Activated B cell treated with CpG ODN at 0.5 μM for 24 hours (primary cell): ENCODE measurements at regions of chr1 and their contacts with region 1.

Region 1: DNA sequence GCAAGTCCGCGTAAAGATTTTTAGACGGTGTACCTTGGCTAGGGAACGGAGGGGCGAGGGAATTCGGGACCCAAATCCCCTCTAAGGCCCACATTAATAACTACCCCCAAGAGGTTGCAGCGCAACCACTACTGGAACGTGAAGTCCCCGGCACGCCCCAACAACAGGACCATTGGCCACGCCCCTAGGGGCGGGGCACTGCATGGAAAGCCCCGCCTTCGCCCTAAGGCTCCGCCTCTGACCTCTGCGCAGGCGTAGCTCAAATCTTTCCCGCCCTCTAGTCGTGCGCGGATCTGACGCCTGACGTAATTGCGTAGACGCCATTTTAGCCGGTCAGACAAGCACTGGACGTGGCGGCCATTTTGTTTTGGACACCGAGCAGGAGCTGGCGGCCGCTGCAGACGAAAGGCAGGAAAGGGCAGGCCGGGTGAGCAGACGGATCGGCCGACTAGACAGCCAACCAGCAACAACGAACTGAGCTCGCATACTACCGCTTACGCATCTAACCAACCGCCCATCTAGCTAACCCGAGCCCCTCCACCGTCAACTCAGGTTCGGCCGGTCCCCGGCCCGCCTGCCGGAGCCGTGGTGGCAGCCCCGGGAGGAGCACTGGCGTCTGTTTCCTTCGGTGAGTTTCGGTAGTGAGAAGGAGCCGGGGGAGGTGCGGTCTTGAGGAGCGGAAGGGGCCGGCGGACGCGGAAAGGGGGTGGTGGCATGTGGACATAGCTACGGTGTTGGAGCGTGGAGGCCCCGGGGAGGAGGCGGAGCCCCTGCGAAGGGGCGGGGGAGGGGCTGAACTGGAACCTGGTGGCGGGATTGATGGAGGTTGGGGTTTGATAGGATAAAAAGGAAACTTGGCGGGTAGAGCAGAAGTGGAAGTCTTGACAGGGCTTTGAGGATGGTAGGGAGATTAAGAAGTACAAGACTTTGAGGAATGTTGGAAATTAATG is at the start of gene CHTOP:
- DNase-seq: peak; percentile 98
- ATAC-seq: peak; percentile 86
- H3K4me3 Mint-ChIP-seq: peak within 1 kb of the TSS; percentile 99
- H3K27ac Mint-ChIP-seq: peak within 1 kb of the TSS; percentile 100
- H3K4me1 Mint-ChIP-seq: peaks cover 44% of the 10 kb centered on the region
- H3K27me3 Mint-ChIP-seq: no peaks in the 10 kb centered on the region
- CTCF ChIP-seq: no peak
- total RNA-seq, gene CHTOP: 140 and 148 TPM in 2 replicates

Region 2: DNA sequence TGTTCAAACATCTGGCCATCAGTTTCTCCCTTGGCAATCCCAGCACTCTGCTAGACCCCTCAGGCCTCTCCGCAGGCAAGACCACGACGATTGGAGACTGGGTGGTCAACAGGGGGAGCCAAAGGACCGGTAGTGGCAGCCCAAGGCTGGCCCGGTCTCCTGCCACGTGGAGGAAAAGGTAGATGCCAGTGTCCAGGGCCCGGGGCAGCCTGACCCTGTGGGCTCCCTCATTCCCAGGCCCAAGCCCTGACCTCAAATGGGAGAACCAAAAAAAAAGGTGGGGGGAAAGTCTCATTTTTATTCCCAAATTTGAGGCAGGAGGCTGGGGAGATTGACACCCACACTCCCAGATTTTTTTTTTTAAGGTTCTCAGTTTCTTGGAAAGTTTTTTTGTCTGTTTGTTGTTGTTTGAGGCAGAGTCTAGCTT is 123.0 kb before region 1 on chr1:
- CTCF ChIA-PET with region 1: interaction called, 8 read pairs
- POLR2A ChIA-PET with region 1: interaction called, 8 read pairs
- intact Hi-C with region 1: loop called (anchors 2 kb)
- DNase-seq: peak; percentile 67
- ATAC-seq: peak; percentile 97
- H3K4me3 Mint-ChIP-seq: no peak overlapping the region
- H3K27ac Mint-ChIP-seq: no peak overlapping the region
- H3K4me1 Mint-ChIP-seq: peaks cover 4% of the 10 kb centered on the region
- H3K27me3 Mint-ChIP-seq: no peaks in the 10 kb centered on the region
- CTCF ChIP-seq: peak; percentile 81

Region 3: DNA sequence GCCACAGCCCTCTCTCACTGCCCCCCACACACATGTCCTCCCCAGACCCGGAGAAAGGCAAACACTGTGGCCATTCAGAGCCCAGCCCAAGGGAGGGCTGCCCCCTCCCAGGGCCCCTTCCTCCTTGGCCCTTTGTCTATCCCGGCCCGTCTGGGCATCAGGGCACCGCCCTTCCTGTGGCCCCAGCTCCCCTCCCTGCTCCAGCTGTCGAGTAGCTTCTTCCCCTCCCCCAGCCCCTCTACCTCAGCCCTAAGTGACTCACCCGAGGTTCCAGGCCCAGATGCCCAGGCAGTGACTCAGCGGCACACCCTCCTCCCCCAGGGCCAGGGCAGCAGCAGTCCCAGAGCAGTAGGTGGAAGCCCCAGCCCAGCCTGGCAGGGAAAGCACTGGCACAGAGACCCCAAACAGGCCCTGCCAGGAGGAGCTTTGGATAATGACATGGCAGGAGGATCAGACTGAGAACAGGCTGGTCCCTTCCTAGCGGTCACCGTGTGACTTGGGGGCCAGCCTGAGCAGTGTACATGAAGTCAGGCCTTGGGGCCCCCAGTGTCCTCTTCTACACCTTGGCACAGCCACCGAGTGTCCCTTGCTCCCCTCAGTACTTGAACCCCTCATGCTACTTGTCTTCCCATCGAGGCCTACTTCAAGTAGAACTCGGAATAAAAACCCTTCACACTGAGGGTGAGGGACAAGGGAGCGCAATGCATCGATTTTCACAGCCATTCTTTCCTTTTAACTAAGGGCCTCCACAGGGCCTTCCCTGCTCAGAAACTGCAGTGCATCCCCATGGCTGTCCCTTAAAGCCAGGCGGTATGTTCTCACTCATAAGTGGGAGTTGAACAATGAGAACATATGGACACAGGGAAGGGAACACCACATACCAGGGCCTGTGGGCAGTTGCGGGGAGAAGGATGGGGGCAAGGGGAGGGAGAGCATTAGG is 67.3 kb before region 1 on chr1:
- CTCF ChIA-PET with region 1: interaction called, 38 read pairs
- POLR2A ChIA-PET with region 1: interaction called, 65 read pairs
- intact Hi-C with region 1: loop called (anchors 1 kb)
- DNase-seq: peak; percentile 71
- ATAC-seq: peak; percentile 82
- H3K4me3 Mint-ChIP-seq: peak overlapping the region; percentile 70
- H3K27ac Mint-ChIP-seq: peak overlapping the region; percentile 99
- H3K4me1 Mint-ChIP-seq: peaks cover 36% of the 10 kb centered on the region
- H3K27me3 Mint-ChIP-seq: peaks cover 6% of the 10 kb centered on the region
- CTCF ChIP-seq: no peak

Region 4: DNA sequence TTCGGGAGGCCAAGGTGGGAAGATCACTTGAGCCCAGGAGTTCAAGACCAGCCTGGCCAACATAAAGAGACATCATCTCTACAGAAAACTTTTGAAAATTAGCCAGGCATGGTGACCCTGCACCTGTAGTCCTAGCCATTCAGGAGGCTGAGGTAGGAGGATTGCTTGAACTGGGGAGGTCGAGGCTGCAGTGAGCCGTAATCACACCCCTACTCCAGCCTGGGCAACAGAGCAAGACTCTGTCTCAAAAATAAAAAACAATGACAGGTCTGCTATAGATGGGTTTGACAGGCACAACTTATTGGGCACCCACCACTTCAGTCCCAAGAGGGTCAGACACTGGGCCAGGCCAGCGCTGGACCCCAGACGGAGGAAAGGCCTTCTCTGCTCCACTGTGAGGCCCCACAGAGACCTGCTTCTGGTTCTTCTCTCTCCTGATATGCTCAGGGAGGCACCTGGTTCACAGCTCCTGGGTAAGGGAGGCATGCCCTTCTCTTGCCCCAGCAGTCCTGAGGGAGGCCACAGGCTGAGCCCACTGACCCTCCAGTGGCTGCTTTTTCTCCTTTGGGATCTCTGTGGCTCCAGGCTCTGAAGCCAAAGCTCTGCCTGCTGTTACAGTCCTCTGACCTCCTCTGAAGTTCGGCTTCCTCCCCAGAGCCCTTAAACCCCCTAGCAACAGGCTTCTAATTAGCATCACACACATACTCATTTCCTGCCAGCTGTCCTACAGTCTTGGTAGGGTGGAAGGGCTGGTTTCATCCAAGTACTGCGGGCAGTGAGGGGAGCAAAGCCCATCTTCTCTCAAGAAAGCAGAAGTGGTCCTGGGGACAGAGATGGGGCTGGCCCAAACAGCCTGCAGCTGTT is 35.5 kb before region 1 on chr1:
- CTCF ChIA-PET with region 1: interaction called, 8 read pairs
- POLR2A ChIA-PET with region 1: interaction called, 138 read pairs
- intact Hi-C with region 1: loop called (anchors 1 kb)
- DNase-seq: peak; percentile 57
- ATAC-seq: peak; percentile 92
- H3K4me3 Mint-ChIP-seq: peak overlapping the region; percentile 73
- H3K27ac Mint-ChIP-seq: peak overlapping the region; percentile 96
- H3K4me1 Mint-ChIP-seq: peaks cover 48% of the 10 kb centered on the region
- H3K27me3 Mint-ChIP-seq: no peaks in the 10 kb centered on the region
- CTCF ChIP-seq: no peak

Region 5: DNA sequence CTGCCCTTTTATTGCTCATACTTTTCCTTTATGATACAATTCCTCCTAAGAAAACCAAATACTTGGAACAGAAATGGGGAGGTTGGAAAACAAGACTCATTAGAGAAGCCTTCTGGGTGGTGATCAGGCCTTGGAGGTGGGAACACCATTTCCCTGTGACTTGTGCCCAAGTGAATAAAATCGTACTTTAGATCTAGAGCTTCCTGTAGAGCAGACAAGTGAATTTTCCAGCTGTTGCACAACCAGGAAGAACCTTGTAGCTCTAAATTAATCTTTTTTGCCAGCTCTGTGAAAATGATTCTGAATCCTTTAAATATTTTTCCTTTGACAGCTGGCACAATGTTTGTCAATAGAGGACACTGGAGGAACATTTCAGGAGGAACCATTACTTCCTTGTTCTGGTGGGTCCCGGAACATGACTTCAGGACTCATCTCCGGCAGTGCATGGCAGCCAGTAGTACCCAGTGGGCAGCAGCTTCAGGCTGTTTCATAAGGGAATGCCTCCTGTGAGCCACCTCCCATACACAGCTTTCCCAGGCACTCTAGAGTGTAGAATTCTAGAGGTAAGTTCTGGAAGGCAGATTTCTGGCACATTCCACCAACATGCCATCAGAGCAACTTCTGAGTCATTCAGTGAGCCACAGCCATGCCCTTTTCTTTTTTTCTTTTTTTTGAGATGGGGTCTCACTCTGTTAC is 19.0 kb after region 1 on chr1:
- CTCF ChIA-PET with region 1: no interaction called
- POLR2A ChIA-PET with region 1: interaction called, 37 read pairs
- intact Hi-C with region 1: loop called (anchors 1 kb)
- DNase-seq: no peak
- ATAC-seq: no peak
- H3K4me3 Mint-ChIP-seq: no peak overlapping the region
- H3K27ac Mint-ChIP-seq: no peak overlapping the region
- H3K4me1 Mint-ChIP-seq: peaks cover 4% of the 10 kb centered on the region
- H3K27me3 Mint-ChIP-seq: no peaks in the 10 kb centered on the region
- CTCF ChIP-seq: no peak

Region 6: DNA sequence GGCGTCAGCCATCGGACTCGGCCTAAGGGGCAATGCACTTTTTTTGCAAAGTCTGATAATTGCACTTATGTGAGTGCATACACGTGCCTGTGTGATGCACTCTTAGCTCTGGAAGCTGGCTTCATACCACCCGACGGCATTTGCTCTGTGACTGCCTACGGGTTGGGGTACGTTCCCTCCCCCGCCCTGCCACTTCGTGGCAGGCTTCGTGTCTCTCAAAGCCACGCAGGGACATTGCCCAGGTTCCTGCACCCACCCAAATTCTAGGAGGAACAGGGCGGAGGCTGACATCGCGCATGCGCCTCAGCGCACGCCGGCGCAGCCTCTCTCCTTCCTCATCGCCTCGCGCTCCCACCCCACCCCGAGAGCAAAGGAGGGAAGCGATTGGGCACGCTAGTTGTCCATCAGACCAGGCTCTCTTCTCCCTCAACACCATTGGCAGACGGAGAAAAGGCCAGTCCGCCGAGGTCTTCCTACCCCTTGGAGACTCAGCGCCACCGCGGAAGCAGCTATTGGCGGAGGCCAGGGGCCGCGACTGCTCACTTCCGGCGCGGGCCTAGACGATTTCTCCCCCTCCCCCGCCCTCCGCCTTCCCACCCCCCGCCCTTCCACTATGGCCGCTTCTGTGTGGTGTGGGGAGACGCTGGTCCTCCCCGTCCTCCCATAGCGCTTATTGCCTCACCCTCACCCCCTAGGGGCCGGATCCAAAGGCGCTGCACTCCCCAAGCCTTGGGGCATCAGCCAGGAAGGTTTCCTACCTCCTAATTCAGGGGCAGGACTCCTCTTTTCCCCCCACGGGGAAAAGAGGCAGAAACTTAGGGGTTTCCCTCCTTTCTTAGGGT is 93.7 kb after region 1 on chr1 and contains the start of gene INTS3:
- CTCF ChIA-PET with region 1: no interaction called
- POLR2A ChIA-PET with region 1: interaction called, 11 read pairs
- intact Hi-C with region 1: no loop called
- DNase-seq: peak; percentile 90
- ATAC-seq: peak; percentile 96
- H3K4me3 Mint-ChIP-seq: peak within 1 kb of the TSS; percentile 97
- H3K27ac Mint-ChIP-seq: peak within 1 kb of the TSS; percentile 96
- H3K4me1 Mint-ChIP-seq: peaks cover 39% of the 10 kb centered on the region
- H3K27me3 Mint-ChIP-seq: no peaks in the 10 kb centered on the region
- CTCF ChIP-seq: no peak
- total RNA-seq, gene INTS3: 81.1 and 88.6 TPM in 2 replicates

Region 7: DNA sequence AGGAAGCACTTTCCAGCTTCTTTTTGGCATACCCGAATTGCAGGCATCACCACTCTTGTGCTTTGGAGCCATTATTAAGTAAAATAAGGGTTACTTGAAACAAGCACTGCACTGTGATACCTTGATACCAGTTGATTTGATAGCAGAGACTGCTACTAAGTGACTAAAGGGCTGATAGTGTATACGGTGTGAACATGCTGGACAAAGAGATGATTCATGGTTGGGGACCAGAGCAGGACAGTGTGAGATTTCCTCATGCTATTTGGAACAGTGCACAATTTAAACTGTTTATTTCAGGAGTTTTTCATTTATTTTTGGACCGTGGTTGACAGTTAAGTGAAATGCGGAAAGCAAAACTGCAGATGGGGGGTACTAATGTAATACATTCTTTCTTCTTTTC is 366.4 kb after region 1 on chr1:
- CTCF ChIA-PET with region 1: no interaction called
- POLR2A ChIA-PET with region 1: interaction called, 10 read pairs
- intact Hi-C with region 1: no loop called
- DNase-seq: no peak
- ATAC-seq: no peak
- H3K4me3 Mint-ChIP-seq: no peak overlapping the region
- H3K27ac Mint-ChIP-seq: no peak overlapping the region
- H3K4me1 Mint-ChIP-seq: peaks cover under 1% of the 10 kb centered on the region
- H3K27me3 Mint-ChIP-seq: no peaks in the 10 kb centered on the region
- CTCF ChIP-seq: no peak